Colonic mucosa (tissue), 4 donors: ENCODE measurements at regions of chr12 and their contacts with region 1.

Region 1: GRCh38 chr12:12837025-12837872 is 24.1 kb downstream of the DDX47 start:
- DNase-seq: peak; percentile 49
- H3K4me3 ChIP-seq: no peak overlapping the region
- H3K27ac ChIP-seq: no peak overlapping the region
- H3K4me1 ChIP-seq: peaks cover 8% of the 10 kb centered on the region
- H3K27me3 ChIP-seq: no peaks in the 10 kb centered on the region
- CTCF ChIP-seq: peak; percentile 30

Region 2: GRCh38 chr12:12881151-12881894 is 44.1 kb after region 1 on chr12:
- intact Hi-C with region 1: loop called (anchors 10 kb)
- DNase-seq: peak; percentile 71
- H3K4me3 ChIP-seq: no peak overlapping the region
- H3K27ac ChIP-seq: peak overlapping the region; percentile 70
- H3K4me1 ChIP-seq: peaks cover 6% of the 10 kb centered on the region
- H3K27me3 ChIP-seq: no peaks in the 10 kb centered on the region
- CTCF ChIP-seq: no peak

Region 3: DNA sequence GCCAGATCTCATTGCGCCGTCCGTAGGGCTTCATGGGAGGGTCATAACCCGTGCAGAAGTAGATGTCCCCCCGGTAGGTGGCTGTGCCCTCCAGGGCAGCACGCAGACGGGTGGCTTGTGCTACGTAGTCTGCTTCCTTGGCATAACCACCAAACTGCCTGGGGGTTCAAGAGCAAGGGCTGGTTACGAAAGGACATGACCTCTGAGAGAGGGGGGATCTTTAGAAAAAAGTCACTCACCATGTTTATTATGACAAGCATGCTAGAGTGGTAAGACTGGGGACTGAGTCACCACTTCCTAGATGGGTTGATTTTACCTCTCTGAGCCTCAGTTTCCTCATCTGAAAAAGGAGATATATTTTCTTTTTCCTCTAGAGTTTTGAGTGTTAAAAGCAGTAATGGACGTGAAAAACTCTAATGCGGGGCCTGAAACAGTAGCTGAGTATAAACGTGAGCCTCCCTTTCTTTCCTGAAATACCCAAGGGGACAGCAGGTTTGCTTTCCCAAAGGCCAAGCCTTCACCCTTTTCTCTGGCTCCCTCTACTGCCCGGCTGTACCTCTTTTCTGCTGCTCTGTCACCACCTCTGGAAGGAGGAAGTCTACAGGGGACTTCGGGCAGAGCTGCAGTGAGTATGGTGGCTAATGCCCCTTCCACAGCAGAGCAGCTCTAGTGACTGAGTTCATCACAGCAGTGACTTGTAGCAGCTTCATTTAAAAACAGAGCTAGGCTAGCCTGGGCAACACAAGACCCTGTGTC is 138.3 kb after region 1 on chr12:
- intact Hi-C with region 1: loop called (anchors 10 kb)
- DNase-seq: peak; percentile 65
- H3K4me3 ChIP-seq: no peak overlapping the region
- H3K27ac ChIP-seq: no peak overlapping the region
- H3K4me1 ChIP-seq: no peaks in the 10 kb centered on the region
- H3K27me3 ChIP-seq: no peaks in the 10 kb centered on the region
- CTCF ChIP-seq: no peak